AG04450 (cell line): ENCODE measurements at regions of chr7 and their contacts with region 1.

Region 1: GRCh38 chr7:10973061-10973944 is at the start of gene PHF14:
- DNase-seq: peak; percentile 93
- H3K4me3 ChIP-seq: peak within 1 kb of the TSS; percentile 85
- H3K27ac ChIP-seq: peak within 1 kb of the TSS; percentile 82
- H3K27me3 ChIP-seq: no peaks in the 10 kb centered on the region
- CTCF ChIP-seq: no peak
- polyA plus RNA-seq, gene PHF14: 16.7 and 26.2 TPM in 2 replicates

Region 2: GRCh38 chr7:10939911-10940703 is 33.2 kb before region 1 on chr7:
- CTCF ChIA-PET with region 1: no interaction called
- POLR2A ChIA-PET with region 1: interaction called, 32 read pairs
- DNase-seq: peak; percentile 90
- H3K4me3 ChIP-seq: peak overlapping the region; percentile 98
- H3K27ac ChIP-seq: peak overlapping the region; percentile 96
- H3K27me3 ChIP-seq: no peaks in the 10 kb centered on the region
- CTCF ChIP-seq: no peak

Region 3: GRCh38 chr7:12139409-12139808 is 1166.1 kb after region 1 on chr7:
- CTCF ChIA-PET with region 1: no interaction called
- POLR2A ChIA-PET with region 1: no interaction called
- DNase-seq: no peak
- H3K4me3 ChIP-seq: no peak overlapping the region
- H3K27ac ChIP-seq: no peak overlapping the region
- H3K27me3 ChIP-seq: no peaks in the 10 kb centered on the region
- CTCF ChIP-seq: no peak